Activated naive CD8-positive, alpha-beta T cell treated with anti-CD3 and anti-CD28 coated beads, Interleukin-2, amount 10 ng/mL, durations not matched to agents 7 days and 5 days (primary cell): ENCODE measurements at regions of chr6 and their contacts with region 1.

Region 1: DNA sequence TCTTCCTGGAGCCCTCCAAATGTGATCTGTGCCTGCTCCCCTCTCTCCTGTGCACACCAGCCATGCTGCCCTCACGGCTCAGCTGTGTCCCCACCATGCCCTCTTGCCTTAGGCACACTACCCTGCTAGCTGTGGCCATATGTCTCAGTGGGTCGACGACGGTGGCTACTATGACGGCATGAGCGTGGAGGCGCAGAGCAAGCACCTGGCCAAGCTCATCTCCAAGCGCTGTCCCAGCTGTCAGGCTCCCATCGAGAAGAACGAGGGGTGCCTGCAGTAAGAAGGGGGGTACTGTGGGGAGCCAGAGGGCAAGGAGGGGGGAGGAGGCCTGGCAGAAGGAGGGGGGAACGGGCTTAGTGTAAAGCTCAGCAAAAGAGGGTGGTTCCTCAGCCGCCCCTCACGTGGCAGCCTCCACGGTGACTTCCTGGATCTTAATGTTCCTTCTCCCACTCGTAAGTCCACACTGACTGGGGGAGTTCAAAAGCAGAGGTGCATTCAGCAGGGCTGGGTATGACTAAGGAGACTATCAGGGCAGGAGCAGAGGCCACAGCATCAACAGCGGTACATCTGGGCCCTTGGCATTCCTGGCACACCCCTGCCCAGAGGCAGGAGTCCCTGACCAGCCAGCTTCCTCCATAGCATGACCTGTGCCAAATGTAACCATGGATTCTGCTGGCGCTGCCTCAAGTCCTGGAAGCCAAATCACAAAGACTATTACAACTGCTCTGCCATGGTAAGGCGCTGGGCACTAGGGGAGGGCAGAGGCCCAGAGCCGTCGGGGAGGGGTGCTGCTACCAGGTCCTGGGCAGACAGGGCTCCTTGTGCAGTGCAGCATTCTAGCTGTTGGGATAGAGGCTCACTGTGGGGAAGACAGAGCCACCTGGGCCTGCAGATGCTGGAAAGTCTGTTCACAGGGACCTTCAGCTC is 8.0 kb downstream of the DNPH1 start:
- DNase-seq: peak; percentile 16
- ATAC-seq: no peak
- H3K4me3 Mint-ChIP-seq: no peak overlapping the region
- H3K27ac Mint-ChIP-seq: peak overlapping the region; percentile 43
- H3K4me1 Mint-ChIP-seq: peaks cover 24% of the 10 kb centered on the region
- H3K27me3 Mint-ChIP-seq: no peaks in the 10 kb centered on the region

Region 2: DNA sequence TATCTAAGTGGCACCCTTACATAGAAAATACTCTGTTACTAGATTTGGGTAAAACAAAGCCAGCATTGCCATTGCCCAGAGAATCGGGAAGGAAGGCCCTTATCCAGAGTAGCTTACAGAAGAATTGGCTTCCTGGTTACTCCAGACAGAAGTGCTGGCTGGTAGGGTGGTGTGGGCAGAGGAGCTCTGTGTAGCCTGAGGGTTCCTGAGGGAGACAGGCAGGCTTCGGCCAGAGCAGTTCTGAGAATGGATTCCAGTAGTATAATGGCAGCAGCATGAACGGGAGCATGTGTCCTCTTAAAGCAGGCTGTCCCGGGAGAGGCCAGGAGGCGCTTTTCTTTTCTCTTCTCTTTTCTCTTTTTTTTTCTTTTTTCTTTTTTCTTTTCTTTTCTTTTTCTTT is 27.4 kb before region 1 on chr6:
- POLR2A ChIA-PET with region 1: interaction called, 11 read pairs
- DNase-seq: peak; percentile 17
- ATAC-seq: no peak
- H3K4me3 Mint-ChIP-seq: no peak overlapping the region
- H3K27ac Mint-ChIP-seq: no peak overlapping the region
- H3K4me1 Mint-ChIP-seq: peaks cover 3% of the 10 kb centered on the region
- H3K27me3 Mint-ChIP-seq: no peaks in the 10 kb centered on the region

Region 3: GRCh38 chr6:43231735-43232450 is 10.6 kb after region 1 on chr6:
- POLR2A ChIA-PET with region 1: no interaction called
- DNase-seq: no peak
- ATAC-seq: no peak
- H3K4me3 Mint-ChIP-seq: no peak overlapping the region
- H3K27ac Mint-ChIP-seq: no peak overlapping the region
- H3K4me1 Mint-ChIP-seq: peaks cover 13% of the 10 kb centered on the region
- H3K27me3 Mint-ChIP-seq: peaks cover 21% of the 10 kb centered on the region